ENCODE measurements at regions of chr6 and their contacts with region 1.

Region 1: GRCh38 chr6:37528541-37528940 is 28.8 kb upstream of the CCDC167 start:
- DNase-seq: no peak
- H3K4me3 ChIP-seq: no peak overlapping the region
- H3K27ac ChIP-seq: no peak overlapping the region
- H3K4me1 ChIP-seq: no peaks in the 10 kb centered on the region
- H3K27me3 ChIP-seq: peaks cover 0 to 33% of the 10 kb centered on the region in 2 donors
- CTCF ChIP-seq: no peak
- POLR2A ChIP-seq: no peak

Region 2: DNA sequence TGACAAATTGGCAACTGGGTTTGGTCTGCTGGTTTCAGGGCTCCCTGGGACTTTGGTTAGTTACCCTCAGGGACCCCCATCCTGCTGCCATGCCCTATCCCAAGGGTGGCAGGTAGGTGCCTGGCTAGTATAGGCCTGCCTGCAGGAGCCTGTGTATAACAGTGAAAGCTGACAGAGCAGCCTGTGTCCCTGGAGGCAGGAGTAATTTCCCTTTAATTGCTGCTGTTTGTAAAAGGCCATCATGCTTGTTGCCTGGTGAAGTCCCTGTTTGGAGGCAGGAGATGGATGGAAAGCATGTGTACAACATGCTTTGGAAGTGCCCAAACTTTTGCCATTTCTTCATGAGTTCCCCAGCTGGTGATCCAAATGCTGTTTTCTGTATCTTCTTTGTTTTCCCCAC is 65.4 kb before region 1 on chr6:
- intact Hi-C with region 1: loop called (anchors 2 kb)
- DNase-seq: no peak
- H3K4me3 ChIP-seq: no peak overlapping the region
- H3K27ac ChIP-seq: no peak overlapping the region
- H3K4me1 ChIP-seq: no peaks in the 10 kb centered on the region
- H3K27me3 ChIP-seq: no peaks in the 10 kb centered on the region
- CTCF ChIP-seq: no peak
- POLR2A ChIP-seq: no peak

Region 3: GRCh38 chr6:37473397-37474095 is 55.0 kb before region 1 on chr6:
- intact Hi-C with region 1: no loop called
- DNase-seq: peak; percentile 91 to 94
- H3K4me3 ChIP-seq: no peak overlapping the region
- H3K27ac ChIP-seq: no peak overlapping the region
- H3K4me1 ChIP-seq: peaks cover 0 to 5% of the 10 kb centered on the region in 2 donors
- H3K27me3 ChIP-seq: no peaks in the 10 kb centered on the region
- CTCF ChIP-seq: no peak
- POLR2A ChIP-seq: no peak

Region 4: GRCh38 chr6:37489660-37490361 is 38.7 kb before region 1 on chr6:
- intact Hi-C with region 1: no loop called
- DNase-seq: no peak
- H3K4me3 ChIP-seq: no peak overlapping the region
- H3K27ac ChIP-seq: no peak overlapping the region
- H3K4me1 ChIP-seq: no peaks in the 10 kb centered on the region
- H3K27me3 ChIP-seq: no peaks in the 10 kb centered on the region
- CTCF ChIP-seq: no peak
- POLR2A ChIP-seq: no peak